Adrenal gland (tissue), 19 donors: ENCODE measurements at regions of chr17 and their contacts with region 1.

Region 1: DNA sequence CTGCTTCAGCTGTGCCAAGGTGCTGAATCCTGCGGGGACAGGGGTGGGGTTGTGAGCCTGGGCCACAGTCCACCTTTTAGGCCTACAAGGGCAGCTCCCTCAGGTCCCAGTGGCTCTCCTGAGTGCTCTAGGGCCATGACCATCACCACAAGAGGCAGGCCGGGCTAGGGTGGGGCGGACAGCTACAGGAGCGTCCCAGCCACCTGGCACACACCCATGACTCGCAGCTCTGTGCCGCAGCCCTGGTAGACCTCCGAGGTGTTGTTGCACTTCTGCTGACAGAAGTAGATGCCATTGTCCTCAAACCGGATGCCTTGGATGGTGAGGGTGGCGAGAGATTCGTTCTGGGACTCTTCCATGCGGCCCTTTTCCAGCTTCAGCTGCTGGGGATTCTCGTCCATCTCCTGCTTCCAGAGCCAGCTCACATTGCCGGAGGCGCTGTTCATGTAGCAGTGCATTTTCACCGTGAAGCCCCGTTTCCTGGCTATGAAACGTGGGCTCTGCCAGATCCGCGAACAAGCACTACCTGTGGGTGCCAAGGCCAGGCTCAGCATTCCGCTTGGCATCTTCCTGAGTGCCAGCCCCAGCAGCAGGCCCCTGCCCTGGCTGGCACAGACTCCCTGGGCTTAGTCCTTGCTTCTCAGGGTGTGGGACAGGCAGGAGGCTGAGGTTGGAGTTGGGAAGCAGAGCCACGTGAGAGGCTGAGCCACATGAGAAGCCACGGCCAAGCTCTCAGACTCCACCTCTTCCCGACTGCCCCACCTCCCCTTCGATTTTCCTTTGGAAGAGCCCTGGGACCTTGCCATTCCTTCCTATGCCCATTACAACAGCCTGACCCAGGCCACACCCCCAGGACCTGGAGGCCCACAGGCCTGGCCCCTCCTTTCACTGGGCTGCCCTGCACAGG is 2.0 kb downstream of the CD79B start:
- DNase-seq: peak in 1 of 7 donors; percentile 27
- H3K4me3 ChIP-seq: no peak overlapping the region
- H3K27ac ChIP-seq: peak overlapping the region in 1 of 5 donors; percentile 66
- H3K4me1 ChIP-seq: no peaks in the 10 kb centered on the region
- H3K27me3 ChIP-seq: no peaks in the 10 kb centered on the region
- CTCF ChIP-seq: no peak
- POLR2A ChIP-seq: no peak

Region 2: DNA sequence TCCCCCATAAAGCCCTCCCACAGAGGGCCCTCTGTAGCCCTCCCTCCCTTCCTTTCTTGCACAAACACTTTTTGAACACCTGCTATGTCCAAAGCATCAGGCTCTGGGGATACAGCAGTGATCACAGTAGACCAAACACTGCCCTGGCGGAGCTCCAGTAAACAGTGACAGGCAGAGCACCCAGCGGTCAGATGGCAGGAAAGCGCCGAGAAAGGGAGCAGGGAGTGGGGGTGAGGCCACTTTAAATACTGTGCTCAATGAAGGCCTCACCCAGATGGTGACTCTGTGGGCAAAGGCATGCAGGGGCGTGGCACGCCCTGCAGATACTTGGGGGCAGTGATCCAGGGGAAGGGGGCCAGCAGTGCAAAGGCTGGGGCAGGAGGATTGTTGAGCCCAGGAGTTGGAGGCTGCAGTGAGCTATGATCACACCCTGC is 75.6 kb after region 1 on chr17:
- intact Hi-C with region 1: loop called in 1 of 2 experiments (anchors 10 kb)
- DNase-seq: peak in 5 of 7 donors; percentile 13 to 56 (median 23)
- H3K4me3 ChIP-seq: no peak overlapping the region
- H3K27ac ChIP-seq: no peak overlapping the region
- H3K4me1 ChIP-seq: peaks cover 3 to 34% of the 10 kb centered on the region in 2 donors
- H3K27me3 ChIP-seq: no peaks in the 10 kb centered on the region
- CTCF ChIP-seq: no peak
- POLR2A ChIP-seq: no peak

Region 3: DNA sequence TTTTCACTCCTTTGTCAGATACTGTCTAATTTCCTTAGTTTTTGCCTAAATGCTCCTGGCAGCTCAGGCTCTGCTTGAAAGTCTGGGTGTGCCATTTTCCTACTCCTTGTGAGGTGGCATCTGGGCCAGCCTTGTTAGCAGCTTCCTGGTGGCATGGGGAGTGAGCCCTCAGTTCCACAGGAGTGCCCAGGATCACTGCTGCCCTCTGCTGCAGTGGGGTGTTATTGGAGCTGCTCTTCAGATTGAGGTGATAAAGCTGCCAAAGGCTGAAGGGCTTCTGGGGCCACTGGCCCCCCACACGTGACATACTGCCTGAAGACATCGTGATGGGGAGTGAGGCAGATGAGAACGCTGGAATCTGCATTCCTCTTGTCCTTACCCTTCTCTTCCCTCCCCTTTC is 604.1 kb after region 1 on chr17:
- intact Hi-C with region 1: no loop called
- DNase-seq: no peak
- H3K4me3 ChIP-seq: no peak overlapping the region
- H3K27ac ChIP-seq: peak overlapping the region in 1 of 5 donors; percentile 33
- H3K4me1 ChIP-seq: peaks cover 13 to 20% of the 10 kb centered on the region in 2 donors
- H3K27me3 ChIP-seq: no peaks in the 10 kb centered on the region
- CTCF ChIP-seq: no peak
- POLR2A ChIP-seq: no peak